Activated naive CD8-positive, alpha-beta T cell treated with anti-CD3 and anti-CD28 coated beads, Interleukin-2, amount 10 ng/mL, durations not matched to agents 7 days and 5 days (primary cell): ENCODE measurements at regions of chr3 and their contacts with region 1.

Region 1: GRCh38 chr3:111594205-111594604 is 941 bp downstream of the ZBED2 start:
- DNase-seq: no peak
- ATAC-seq: peak; percentile 30
- H3K4me3 Mint-ChIP-seq: peak overlapping the region; percentile 66
- H3K27ac Mint-ChIP-seq: peak overlapping the region; percentile 88
- H3K4me1 Mint-ChIP-seq: peaks cover 52% of the 10 kb centered on the region
- H3K27me3 Mint-ChIP-seq: no peaks in the 10 kb centered on the region

Region 2: GRCh38 chr3:110932567-110932966 is 661.6 kb before region 1 on chr3:
- POLR2A ChIA-PET with region 1: no interaction called
- DNase-seq: no peak
- ATAC-seq: no peak
- H3K4me3 Mint-ChIP-seq: no peak overlapping the region
- H3K27ac Mint-ChIP-seq: no peak overlapping the region
- H3K4me1 Mint-ChIP-seq: no peaks in the 10 kb centered on the region
- H3K27me3 Mint-ChIP-seq: peaks cover 2% of the 10 kb centered on the region

Region 3: GRCh38 chr3:111418391-111418790 is 175.8 kb before region 1 on chr3:
- POLR2A ChIA-PET with region 1: no interaction called
- DNase-seq: no peak
- ATAC-seq: no peak
- H3K4me3 Mint-ChIP-seq: no peak overlapping the region
- H3K27ac Mint-ChIP-seq: no peak overlapping the region
- H3K4me1 Mint-ChIP-seq: no peaks in the 10 kb centered on the region
- H3K27me3 Mint-ChIP-seq: peaks cover 6% of the 10 kb centered on the region

Region 4: DNA sequence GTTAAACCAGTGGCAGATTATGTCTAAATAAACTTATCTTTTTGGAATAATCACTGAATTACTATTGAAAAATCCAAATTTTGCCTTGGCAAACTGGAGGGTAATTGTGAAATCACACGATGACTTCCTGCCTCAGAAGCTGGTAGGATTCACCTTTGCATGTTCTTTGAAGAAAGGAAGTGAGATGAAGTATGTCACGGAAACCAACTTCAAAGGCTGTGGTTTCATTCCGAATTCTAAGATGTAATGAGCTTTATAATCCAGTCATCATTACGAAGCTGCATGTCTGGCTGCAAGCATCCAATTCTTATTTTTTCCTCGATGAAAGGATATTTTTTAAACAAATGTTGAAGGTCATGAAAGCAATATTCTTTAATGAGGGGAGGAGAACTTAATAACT is 16.0 kb after region 1 on chr3:
- POLR2A ChIA-PET with region 1: interaction called, 10 read pairs
- DNase-seq: no peak
- ATAC-seq: peak; percentile 71
- H3K4me3 Mint-ChIP-seq: peak overlapping the region; percentile 69
- H3K27ac Mint-ChIP-seq: peak overlapping the region; percentile 93
- H3K4me1 Mint-ChIP-seq: peaks cover 91% of the 10 kb centered on the region
- H3K27me3 Mint-ChIP-seq: no peaks in the 10 kb centered on the region

Region 5: DNA sequence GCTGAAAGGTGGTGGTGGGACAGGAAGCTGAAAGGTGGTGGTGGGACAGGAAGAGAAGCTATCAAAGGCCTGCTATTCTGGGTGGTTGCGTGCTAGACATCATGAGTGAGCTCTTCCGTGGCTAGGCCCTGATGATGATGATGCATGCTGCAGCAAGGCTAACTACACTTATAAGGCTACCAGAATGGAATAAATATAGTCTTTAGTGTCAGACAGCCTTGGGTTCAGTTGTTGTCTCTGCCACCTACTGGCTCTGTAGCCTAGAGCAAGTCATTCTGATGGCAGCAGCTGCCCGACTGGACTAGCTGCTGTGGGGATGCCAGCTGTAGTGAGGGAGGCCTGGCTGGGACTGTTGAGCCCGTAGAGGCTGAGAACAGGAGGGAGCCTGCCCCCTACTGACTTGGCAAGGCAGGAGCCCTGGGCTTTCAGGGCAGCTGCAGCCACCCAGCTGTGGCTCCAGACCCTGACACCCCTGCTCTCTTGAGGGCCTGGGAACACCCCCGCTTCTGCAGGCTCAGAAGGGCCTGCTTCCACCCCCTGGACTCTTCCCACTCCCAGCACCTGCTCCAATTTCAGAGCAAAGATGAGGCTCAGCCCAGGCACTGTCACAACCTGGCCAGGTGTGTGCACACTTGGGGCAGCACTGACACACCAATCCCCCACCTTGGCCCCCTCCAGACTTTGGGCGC is 22.4 kb after region 1 on chr3:
- POLR2A ChIA-PET with region 1: interaction called, 10 read pairs
- DNase-seq: peak; percentile 67
- ATAC-seq: peak; percentile 92
- H3K4me3 Mint-ChIP-seq: peak overlapping the region; percentile 18
- H3K27ac Mint-ChIP-seq: peak overlapping the region; percentile 91
- H3K4me1 Mint-ChIP-seq: peaks cover 55% of the 10 kb centered on the region
- H3K27me3 Mint-ChIP-seq: no peaks in the 10 kb centered on the region